CD4-positive, alpha-beta memory T cell (primary cell): ENCODE measurements at regions of chr9 and their contacts with region 1.

Region 1: DNA sequence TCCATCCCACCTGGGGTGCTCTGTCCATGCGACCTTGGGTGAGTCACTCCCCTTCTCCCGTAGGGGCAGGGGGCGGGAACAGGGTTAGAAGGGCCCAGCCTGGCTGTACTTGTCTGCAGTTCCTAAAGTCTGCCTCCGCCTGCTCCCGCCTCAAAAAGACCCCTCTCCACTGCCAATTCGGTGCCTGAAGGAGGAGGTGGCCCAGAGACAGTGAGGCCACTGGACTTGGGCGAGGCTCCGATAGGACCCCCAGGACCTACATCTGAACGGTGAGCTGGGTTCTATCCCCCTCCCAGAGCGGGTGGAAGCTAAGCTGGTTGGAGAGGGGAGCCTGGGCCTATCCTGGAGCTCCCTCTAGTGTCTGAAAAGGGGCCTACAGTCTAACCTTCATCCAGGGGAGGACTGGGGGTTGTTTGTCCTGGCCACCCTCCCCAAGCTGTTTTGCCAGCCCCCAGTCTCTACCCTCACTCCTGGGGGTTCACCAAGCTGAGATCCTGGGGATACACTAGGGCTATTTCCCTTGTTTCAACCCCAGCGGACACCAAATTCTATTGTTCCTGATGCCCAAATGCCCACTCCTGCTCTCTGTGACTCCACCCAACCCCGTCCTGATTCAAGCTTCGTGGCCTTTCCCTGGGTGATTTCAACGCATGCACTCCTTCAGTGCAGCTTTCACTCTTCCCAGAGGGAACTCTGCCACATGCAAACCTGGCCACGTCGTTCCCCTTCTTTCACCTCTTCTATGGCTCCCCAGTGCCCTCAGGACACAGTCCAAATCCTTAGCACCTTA is 6.1 kb upstream of the CRB2 start:
- DNase-seq: peak; percentile 54 to 72 (median 61)
- H3K4me3 ChIP-seq: no peak overlapping the region
- H3K4me3 Mint-ChIP-seq: no peak overlapping the region
- H3K27ac ChIP-seq: no peak overlapping the region
- H3K27ac Mint-ChIP-seq: no peak overlapping the region
- H3K4me1 ChIP-seq: no peaks in the 10 kb centered on the region
- H3K4me1 Mint-ChIP-seq: peaks cover 0 to 4% (median 2%) of the 10 kb centered on the region in 4 donors
- H3K27me3 ChIP-seq: no peaks in the 10 kb centered on the region
- H3K27me3 Mint-ChIP-seq: peaks cover 6 to 11% of the 10 kb centered on the region in 2 donors

Region 2: DNA sequence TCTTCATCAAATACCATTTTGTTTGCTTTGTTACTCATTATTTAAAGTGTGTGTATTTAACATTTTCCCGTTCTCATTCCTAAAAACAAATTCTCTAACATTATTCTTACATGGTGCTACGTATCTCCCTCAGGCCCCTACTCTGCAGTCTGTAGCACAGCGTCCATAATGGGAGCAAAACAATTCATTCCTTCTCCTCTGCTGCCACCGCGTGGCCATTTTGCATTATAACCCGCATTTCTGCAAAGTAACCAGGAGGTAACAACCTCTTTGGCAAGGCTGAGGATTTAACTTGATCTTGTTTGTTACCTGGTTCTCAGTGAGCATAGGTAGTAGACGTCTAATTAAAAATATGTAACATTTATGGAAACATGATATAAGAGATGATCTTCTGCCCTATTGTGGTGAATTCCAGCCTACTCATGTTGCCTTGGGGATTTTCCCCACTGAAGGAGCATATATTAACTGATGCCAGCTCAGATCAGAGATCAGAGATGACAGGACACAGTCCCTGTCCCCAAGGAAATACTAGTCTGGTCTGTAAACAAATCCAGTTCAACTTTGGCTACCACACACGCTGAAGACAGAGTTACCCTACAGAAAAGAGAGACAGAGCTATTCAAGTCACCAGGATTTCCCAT is 539.5 kb before region 1 on chr9:
- CTCF ChIA-PET with region 1: no interaction called
- POLR2A ChIA-PET with region 1: no interaction called
- intact Hi-C with region 1: loop called (anchors 10 kb)
- DNase-seq: peak; percentile 66 to 74 (median 71)
- H3K4me3 ChIP-seq: no peak overlapping the region
- H3K4me3 Mint-ChIP-seq: no peak overlapping the region
- H3K27ac ChIP-seq: no peak overlapping the region
- H3K27ac Mint-ChIP-seq: no peak overlapping the region
- H3K4me1 ChIP-seq: peaks cover 11% of the 10 kb centered on the region
- H3K4me1 Mint-ChIP-seq: peaks cover 9 to 32% (median 22%) of the 10 kb centered on the region in 4 donors
- H3K27me3 ChIP-seq: no peaks in the 10 kb centered on the region
- H3K27me3 Mint-ChIP-seq: no peaks in the 10 kb centered on the region

Region 3: DNA sequence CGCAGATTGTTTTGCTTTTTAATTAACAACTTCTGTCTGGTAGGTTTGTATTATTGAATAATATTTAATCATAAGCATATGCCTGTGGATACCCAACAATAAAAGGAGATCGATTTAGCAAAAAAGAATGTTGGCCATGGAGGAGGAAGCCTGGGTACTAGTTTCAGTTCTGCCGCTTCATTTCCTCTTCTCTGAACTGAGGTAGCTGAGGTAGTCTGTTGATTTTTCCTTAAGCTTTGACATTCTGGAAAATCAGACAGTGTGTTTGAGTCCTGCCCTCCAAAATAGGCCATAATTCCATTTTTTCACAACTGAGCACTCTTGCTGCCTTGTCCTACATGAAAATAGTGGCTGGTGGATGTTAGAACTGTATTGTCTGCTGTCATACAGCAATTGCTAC is 322.4 kb before region 1 on chr9:
- CTCF ChIA-PET with region 1: interaction called, 4 read pairs
- POLR2A ChIA-PET with region 1: no interaction called
- intact Hi-C with region 1: loop called (anchors 5 kb)
- DNase-seq: no peak
- H3K4me3 ChIP-seq: no peak overlapping the region
- H3K4me3 Mint-ChIP-seq: no peak overlapping the region
- H3K27ac ChIP-seq: no peak overlapping the region
- H3K27ac Mint-ChIP-seq: peak overlapping the region in 1 of 7 donors; percentile 25
- H3K4me1 ChIP-seq: no peaks in the 10 kb centered on the region
- H3K4me1 Mint-ChIP-seq: peaks cover 0 to 5% (median 0%) of the 10 kb centered on the region in 4 donors
- H3K27me3 ChIP-seq: no peaks in the 10 kb centered on the region
- H3K27me3 Mint-ChIP-seq: no peaks in the 10 kb centered on the region

Region 4: DNA sequence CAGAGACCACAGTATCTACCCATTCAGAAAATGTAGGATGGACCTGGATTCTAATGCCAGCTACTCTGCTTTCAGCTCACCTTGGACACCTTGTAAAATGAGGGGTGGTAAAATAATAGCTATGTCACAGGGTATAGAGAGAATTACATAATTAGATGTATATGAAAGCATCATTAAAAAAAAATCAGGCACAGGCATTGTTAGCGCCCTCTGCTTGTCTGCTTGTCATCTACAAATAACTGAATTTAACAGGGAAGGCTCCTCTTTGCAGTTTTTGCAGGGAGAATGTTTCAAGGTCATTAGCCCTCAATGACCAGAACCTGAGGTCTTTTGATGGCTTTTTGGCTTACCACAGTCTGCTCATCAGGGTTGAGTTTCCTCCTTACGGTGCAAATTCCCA is 258.4 kb before region 1 on chr9:
- CTCF ChIA-PET with region 1: interaction called, 13 read pairs
- POLR2A ChIA-PET with region 1: no interaction called
- intact Hi-C with region 1: no loop called
- DNase-seq: no peak
- H3K4me3 ChIP-seq: no peak overlapping the region
- H3K4me3 Mint-ChIP-seq: no peak overlapping the region
- H3K27ac ChIP-seq: no peak overlapping the region
- H3K27ac Mint-ChIP-seq: peak overlapping the region in 3 of 7 donors; percentile 21 to 81 (median 22)
- H3K4me1 ChIP-seq: no peaks in the 10 kb centered on the region
- H3K4me1 Mint-ChIP-seq: no peaks in the 10 kb centered on the region
- H3K27me3 ChIP-seq: no peaks in the 10 kb centered on the region
- H3K27me3 Mint-ChIP-seq: no peaks in the 10 kb centered on the region

Region 5: GRCh38 chr9:123112015-123112975 is 237.6 kb before region 1 on chr9:
- CTCF ChIA-PET with region 1: interaction called, 13 read pairs
- POLR2A ChIA-PET with region 1: no interaction called
- intact Hi-C with region 1: no loop called
- DNase-seq: peak in 1 of 5 donors; percentile 7
- H3K4me3 ChIP-seq: no peak overlapping the region
- H3K4me3 Mint-ChIP-seq: peak overlapping the region in 4 of 8 donors; percentile 25 to 55 (median 43)
- H3K27ac ChIP-seq: no peak overlapping the region
- H3K27ac Mint-ChIP-seq: peak overlapping the region; percentile 18 to 89 (median 78)
- H3K4me1 ChIP-seq: peaks cover 12% of the 10 kb centered on the region
- H3K4me1 Mint-ChIP-seq: peaks cover 5 to 29% (median 18%) of the 10 kb centered on the region in 4 donors
- H3K27me3 ChIP-seq: no peaks in the 10 kb centered on the region
- H3K27me3 Mint-ChIP-seq: no peaks in the 10 kb centered on the region

Region 6: GRCh38 chr9:123234853-123235252 is 115.0 kb before region 1 on chr9:
- CTCF ChIA-PET with region 1: no interaction called
- POLR2A ChIA-PET with region 1: no interaction called
- intact Hi-C with region 1: no loop called
- DNase-seq: no peak
- H3K4me3 ChIP-seq: no peak overlapping the region
- H3K4me3 Mint-ChIP-seq: no peak overlapping the region
- H3K27ac ChIP-seq: no peak overlapping the region
- H3K27ac Mint-ChIP-seq: no peak overlapping the region
- H3K4me1 ChIP-seq: peaks cover 4% of the 10 kb centered on the region
- H3K4me1 Mint-ChIP-seq: peaks cover 5 to 11% (median 6%) of the 10 kb centered on the region in 4 donors
- H3K27me3 ChIP-seq: no peaks in the 10 kb centered on the region
- H3K27me3 Mint-ChIP-seq: no peaks in the 10 kb centered on the region

Region 7: DNA sequence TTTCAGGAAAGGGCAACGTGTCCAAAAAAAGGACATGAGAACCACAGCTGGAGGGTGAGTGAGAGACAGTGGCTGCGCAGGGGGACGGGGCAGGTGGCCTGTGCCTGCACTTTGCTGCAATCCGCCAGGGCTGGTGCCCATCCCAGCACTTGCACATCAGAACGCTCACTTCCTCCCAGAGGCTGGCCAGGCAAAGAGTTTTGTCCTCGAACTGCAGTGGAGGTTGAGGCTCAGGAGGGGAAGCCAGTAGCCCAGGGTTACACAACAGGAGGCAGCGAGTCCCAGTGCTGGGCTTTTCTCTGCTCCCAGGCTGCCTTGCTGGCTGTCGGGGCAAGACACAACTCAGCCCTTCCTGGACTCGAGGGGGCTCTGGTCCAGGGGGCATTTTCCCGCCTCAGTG is 39.2 kb after region 1 on chr9:
- CTCF ChIA-PET with region 1: interaction called, 7 read pairs
- POLR2A ChIA-PET with region 1: no interaction called
- intact Hi-C with region 1: loop called (anchors 1 kb)
- DNase-seq: peak in 1 of 5 donors; percentile 17
- H3K4me3 ChIP-seq: no peak overlapping the region
- H3K4me3 Mint-ChIP-seq: no peak overlapping the region
- H3K27ac ChIP-seq: no peak overlapping the region
- H3K27ac Mint-ChIP-seq: no peak overlapping the region
- H3K4me1 ChIP-seq: no peaks in the 10 kb centered on the region
- H3K4me1 Mint-ChIP-seq: no peaks in the 10 kb centered on the region
- H3K27me3 ChIP-seq: no peaks in the 10 kb centered on the region
- H3K27me3 Mint-ChIP-seq: no peaks in the 10 kb centered on the region

Region 8: GRCh38 chr9:123710299-123710698 is 360.4 kb after region 1 on chr9:
- CTCF ChIA-PET with region 1: no interaction called
- POLR2A ChIA-PET with region 1: no interaction called
- intact Hi-C with region 1: no loop called
- DNase-seq: no peak
- H3K4me3 ChIP-seq: no peak overlapping the region
- H3K4me3 Mint-ChIP-seq: no peak overlapping the region
- H3K27ac ChIP-seq: no peak overlapping the region
- H3K27ac Mint-ChIP-seq: no peak overlapping the region
- H3K4me1 ChIP-seq: no peaks in the 10 kb centered on the region
- H3K4me1 Mint-ChIP-seq: peaks cover 0 to 3% (median 0%) of the 10 kb centered on the region in 4 donors
- H3K27me3 ChIP-seq: no peaks in the 10 kb centered on the region
- H3K27me3 Mint-ChIP-seq: no peaks in the 10 kb centered on the region

Region 9: DNA sequence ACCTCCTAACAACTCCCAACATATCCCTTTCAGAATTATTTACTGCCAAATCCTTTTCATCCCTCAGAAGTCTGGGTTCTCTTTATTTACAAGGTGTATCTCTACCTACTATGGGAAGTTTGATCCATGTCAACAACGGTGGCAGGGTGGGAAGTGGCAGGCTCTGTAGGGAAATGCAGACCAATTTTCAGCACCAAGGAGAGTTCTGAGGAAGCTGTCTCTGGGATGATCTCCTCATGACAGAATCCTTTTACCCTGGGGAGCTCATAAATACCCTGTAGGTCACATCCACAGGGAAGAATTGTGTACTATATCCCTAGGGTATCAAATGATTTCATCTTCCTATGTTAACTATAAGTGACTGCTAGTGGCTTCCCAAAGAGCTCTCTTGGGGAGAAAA is 800.1 kb after region 1 on chr9:
- CTCF ChIA-PET with region 1: no interaction called
- POLR2A ChIA-PET with region 1: no interaction called
- intact Hi-C with region 1: no loop called
- DNase-seq: no peak
- H3K4me3 ChIP-seq: no peak overlapping the region
- H3K4me3 Mint-ChIP-seq: no peak overlapping the region
- H3K27ac ChIP-seq: no peak overlapping the region
- H3K27ac Mint-ChIP-seq: no peak overlapping the region
- H3K4me1 ChIP-seq: no peaks in the 10 kb centered on the region
- H3K4me1 Mint-ChIP-seq: peaks cover 4 to 9% (median 8%) of the 10 kb centered on the region in 4 donors
- H3K27me3 ChIP-seq: no peaks in the 10 kb centered on the region
- H3K27me3 Mint-ChIP-seq: peaks cover 0 to 2% of the 10 kb centered on the region in 2 donors